ENCODE measurements at regions of chr12 and their contacts with region 1.

Region 1: DNA sequence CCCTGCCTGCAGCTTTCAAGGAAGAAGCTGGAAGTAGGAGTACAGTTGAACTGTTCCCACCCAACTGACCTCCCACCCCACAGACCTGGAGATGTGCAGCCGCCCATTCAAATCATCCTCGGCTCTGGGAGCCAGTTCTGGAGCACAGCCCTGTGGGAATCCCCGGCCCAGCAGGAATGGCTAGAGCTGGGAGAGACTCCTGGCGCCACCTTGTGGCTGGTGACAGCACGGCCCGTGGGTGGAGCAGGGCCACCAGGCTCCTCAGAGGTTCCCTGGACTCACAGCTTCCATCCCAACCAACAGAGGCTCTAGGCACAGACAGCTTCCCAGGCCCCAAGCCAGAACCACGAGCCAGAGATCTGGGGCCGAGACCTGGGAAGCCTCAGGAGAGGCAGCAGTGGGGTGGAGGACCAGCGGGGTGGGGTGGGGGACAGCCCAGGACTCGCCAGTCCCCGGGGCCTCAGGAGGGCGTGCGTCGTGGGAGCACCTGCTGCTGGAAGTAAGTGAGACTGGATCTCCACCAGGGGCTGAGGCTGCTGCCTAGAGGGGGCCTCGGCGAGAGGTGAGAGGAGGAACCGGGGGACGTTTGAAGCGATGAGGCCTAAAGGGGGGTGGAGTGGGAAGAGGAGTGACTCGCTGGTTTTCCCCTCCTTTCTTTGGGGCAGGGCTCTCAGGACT is 43.4 kb downstream of the RNF34 start:
- DNase-seq: peak; percentile 86
- H3K4me3 ChIP-seq: no peak overlapping the region
- H3K27ac ChIP-seq: no peak overlapping the region
- H3K4me1 ChIP-seq: peaks cover 7% of the 10 kb centered on the region; the same call in 1 of the 2 replicates
- H3K27me3 ChIP-seq: no peaks in the 10 kb centered on the region

Region 2: GRCh38 chr12:121202407-121203370 is 240.6 kb before region 1 on chr12:
- in situ Hi-C with region 1: no loop called
- DNase-seq: no peak
- H3K4me3 ChIP-seq: no peak overlapping the region
- H3K27ac ChIP-seq: no peak overlapping the region
- H3K4me1 ChIP-seq: no peaks in the 10 kb centered on the region
- H3K27me3 ChIP-seq: no peaks in the 10 kb centered on the region; the same call in 1 of the 2 replicates

Region 3: GRCh38 chr12:121274036-121274763 is 169.1 kb before region 1 on chr12:
- in situ Hi-C with region 1: no loop called
- DNase-seq: no peak
- H3K4me3 ChIP-seq: no peak overlapping the region
- H3K27ac ChIP-seq: no peak overlapping the region
- H3K4me1 ChIP-seq: peaks cover 23% of the 10 kb centered on the region
- H3K27me3 ChIP-seq: no peaks in the 10 kb centered on the region

Region 4: DNA sequence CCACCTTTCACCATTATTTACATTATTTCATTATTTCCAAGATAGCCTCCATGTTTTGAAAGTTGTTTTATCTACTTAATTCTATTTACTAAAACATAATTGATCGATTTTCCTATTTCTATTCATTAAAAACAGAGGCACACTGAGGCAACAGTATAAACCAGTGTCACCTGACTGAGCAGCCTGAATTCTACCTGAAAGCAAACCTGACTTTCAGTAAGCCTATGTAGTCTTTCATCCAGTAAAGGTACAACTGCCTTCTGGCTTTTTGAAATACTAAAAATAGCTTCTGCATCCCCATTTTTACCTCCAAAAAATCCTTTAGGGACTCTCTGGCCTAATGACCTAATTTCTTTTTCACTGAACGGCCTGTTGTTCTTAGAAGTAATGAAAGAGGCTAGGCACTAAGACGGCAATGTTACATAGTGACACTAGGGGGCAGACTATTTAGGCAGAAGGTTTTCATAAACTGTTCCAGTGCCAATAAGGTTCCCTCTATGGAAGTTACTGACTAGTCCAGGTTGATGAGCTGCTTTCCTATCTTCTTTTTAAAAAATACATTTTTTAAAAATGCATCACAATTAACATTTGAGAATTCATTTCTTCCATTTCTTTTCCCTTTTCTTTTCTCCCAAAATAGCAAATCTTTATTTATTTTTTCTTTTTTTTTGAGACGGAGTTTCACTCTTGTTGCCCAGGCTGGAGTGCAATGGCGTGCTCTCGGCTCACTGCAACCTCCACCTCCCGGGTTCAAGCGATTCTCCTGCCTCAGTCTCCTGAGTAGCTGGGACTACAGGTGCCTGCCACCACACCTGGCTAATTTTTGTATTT is 108.6 kb before region 1 on chr12:
- in situ Hi-C with region 1: loop called (anchors 25 kb)
- DNase-seq: peak; percentile 85
- H3K4me3 ChIP-seq: no peak overlapping the region
- H3K27ac ChIP-seq: no peak overlapping the region
- H3K4me1 ChIP-seq: no peaks in the 10 kb centered on the region
- H3K27me3 ChIP-seq: no peaks in the 10 kb centered on the region

Region 5: GRCh38 chr12:121499929-121500793 is 56.8 kb after region 1 on chr12:
- in situ Hi-C with region 1: no loop called
- DNase-seq: peak; percentile 72
- H3K4me3 ChIP-seq: no peak overlapping the region
- H3K27ac ChIP-seq: no peak overlapping the region
- H3K4me1 ChIP-seq: no peaks in the 10 kb centered on the region
- H3K27me3 ChIP-seq: no peaks in the 10 kb centered on the region

Measured in GM23248 (cell line).